Mammary epithelial cell (primary cell): ENCODE measurements at regions of chr12 and their contacts with region 1.

Region 1: GRCh38 chr12:53251477-53252348 is 16.4 kb upstream of the ESPL1 start:
- DNase-seq: peak; percentile 72
- H3K4me3 ChIP-seq: peak overlapping the region; percentile 92 to 97 (median 96)
- H3K27ac ChIP-seq: peak overlapping the region; percentile 72
- H3K4me1 ChIP-seq: peaks cover 22% of the 10 kb centered on the region
- H3K27me3 ChIP-seq: no peaks in the 10 kb centered on the region
- CTCF ChIP-seq: peak; percentile 35 to 76

Region 2: DNA sequence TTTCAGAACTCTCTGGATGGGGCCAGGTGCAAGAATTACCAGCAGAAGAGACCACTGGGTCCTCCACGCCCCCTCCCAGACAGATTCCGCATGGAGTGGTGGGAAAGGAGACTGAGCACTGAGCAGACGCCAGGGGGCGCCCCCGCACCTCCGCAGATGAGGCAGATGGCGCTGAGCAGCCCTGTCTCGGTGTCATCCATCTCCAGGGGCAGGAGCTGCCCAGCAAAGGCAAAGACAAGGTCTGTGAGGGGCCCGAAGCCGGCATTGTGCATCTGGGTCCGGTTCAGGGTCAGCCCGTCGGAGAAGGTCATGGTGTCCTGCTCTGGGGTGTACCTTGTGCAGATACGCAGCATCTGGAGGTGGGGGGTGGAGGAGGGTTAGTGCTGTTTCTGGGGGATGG is 38.4 kb before region 1 on chr12:
- CTCF ChIA-PET with region 1: interaction called, 8 read pairs
- dilution Hi-C with region 1: no loop called
- in situ Hi-C with region 1: no loop called
- intact Hi-C with region 1: loop called (anchors 1 kb)
- DNase-seq: no peak
- H3K4me3 ChIP-seq: no peak overlapping the region
- H3K27ac ChIP-seq: no peak overlapping the region
- H3K4me1 ChIP-seq: peaks cover 22% of the 10 kb centered on the region
- H3K27me3 ChIP-seq: no peaks in the 10 kb centered on the region
- CTCF ChIP-seq: peak; percentile 71 to 95

Region 3: DNA sequence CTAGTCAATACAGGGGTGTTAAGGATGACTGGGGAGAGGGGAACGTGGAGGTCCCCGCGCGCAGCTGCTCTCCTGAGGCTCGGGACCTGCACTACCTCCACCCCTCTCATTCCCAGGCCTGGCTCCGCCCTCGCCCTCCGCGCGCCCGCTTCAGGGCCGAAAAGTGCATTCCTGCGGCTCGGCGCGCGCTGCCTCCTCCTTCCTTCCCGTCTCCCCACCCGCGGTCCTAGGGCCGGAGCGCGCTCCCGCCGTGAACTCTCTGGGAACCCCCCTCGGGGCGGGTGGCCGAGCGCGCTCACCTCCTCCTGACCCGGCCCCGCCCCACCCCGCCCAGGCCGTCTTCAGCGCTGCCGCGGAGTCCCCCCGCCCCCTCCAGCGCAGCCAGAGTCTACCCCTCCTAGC is 30.9 kb before region 1 on chr12:
- CTCF ChIA-PET with region 1: interaction called, 3 read pairs
- dilution Hi-C with region 1: no loop called
- in situ Hi-C with region 1: no loop called
- intact Hi-C with region 1: loop called (anchors 1 kb)
- DNase-seq: peak; percentile 93
- H3K4me3 ChIP-seq: peak overlapping the region; percentile 48 to 60 (median 55)
- H3K27ac ChIP-seq: no peak overlapping the region
- H3K4me1 ChIP-seq: peaks cover 83% of the 10 kb centered on the region
- H3K27me3 ChIP-seq: no peaks in the 10 kb centered on the region
- CTCF ChIP-seq: no peak

Region 4: GRCh38 chr12:53231826-53232645 is 19.7 kb before region 1 on chr12 and contains the start of gene RARG:
- CTCF ChIA-PET with region 1: no interaction called
- dilution Hi-C with region 1: no loop called
- in situ Hi-C with region 1: no loop called
- intact Hi-C with region 1: loop called (anchors 2 kb)
- DNase-seq: peak; percentile 77
- H3K4me3 ChIP-seq: peak within 1 kb of the TSS; percentile 77 to 88 (median 80)
- H3K27ac ChIP-seq: peak within 1 kb of the TSS; percentile 67
- H3K4me1 ChIP-seq: peaks cover 58% of the 10 kb centered on the region
- H3K27me3 ChIP-seq: no peaks in the 10 kb centered on the region
- CTCF ChIP-seq: no peak
- total RNA-seq, gene RARG: 33.5 to 79.0 TPM

Region 5: DNA sequence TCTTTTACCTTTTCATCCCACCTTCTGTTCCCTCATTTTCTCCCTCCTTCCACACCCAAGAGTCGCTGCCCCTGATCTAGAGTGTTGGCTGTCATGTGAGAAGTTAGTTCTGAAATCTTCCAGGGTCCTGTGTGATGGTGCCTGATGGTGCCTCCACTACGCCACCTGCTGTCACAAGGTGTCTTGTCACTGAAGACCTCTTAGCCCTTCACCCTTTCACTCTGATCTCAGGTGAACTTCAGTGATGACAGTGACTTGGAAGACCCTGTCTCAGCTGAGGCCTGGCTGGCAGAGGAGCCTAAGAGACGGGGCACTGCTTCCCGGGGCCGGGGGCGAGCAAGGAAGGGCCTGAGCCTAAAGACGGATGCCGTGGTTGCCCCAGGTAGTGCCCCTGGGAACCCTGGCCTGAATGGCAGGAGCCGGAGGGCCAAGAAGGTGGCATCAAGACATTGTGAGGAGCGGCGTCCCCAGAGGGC is 36.1 kb after region 1 on chr12:
- CTCF ChIA-PET with region 1: no interaction called
- dilution Hi-C with region 1: no loop called
- in situ Hi-C with region 1: no loop called
- intact Hi-C with region 1: loop called (anchors 1 kb)
- DNase-seq: peak; percentile 43
- H3K4me3 ChIP-seq: no peak overlapping the region
- H3K27ac ChIP-seq: no peak overlapping the region
- H3K4me1 ChIP-seq: no peaks in the 10 kb centered on the region
- H3K27me3 ChIP-seq: no peaks in the 10 kb centered on the region
- CTCF ChIP-seq: peak; percentile 51 to 80